ENCODE measurements at regions of chr2 and their contacts with region 1.

Region 1: GRCh38 chr2:153478334-153479261 is at the start of gene RPRM:
- DNase-seq: peak; percentile 51
- H3K4me3 Mint-ChIP-seq: peak within 1 kb of the TSS; percentile 61
- H3K27ac Mint-ChIP-seq: no peak within 1 kb of the TSS
- H3K4me1 Mint-ChIP-seq: peaks cover 9% of the 10 kb centered on the region
- H3K27me3 Mint-ChIP-seq: peaks cover 57% of the 10 kb centered on the region
- total RNA-seq, gene RPRM: not detected in 2 replicates

Region 2: DNA sequence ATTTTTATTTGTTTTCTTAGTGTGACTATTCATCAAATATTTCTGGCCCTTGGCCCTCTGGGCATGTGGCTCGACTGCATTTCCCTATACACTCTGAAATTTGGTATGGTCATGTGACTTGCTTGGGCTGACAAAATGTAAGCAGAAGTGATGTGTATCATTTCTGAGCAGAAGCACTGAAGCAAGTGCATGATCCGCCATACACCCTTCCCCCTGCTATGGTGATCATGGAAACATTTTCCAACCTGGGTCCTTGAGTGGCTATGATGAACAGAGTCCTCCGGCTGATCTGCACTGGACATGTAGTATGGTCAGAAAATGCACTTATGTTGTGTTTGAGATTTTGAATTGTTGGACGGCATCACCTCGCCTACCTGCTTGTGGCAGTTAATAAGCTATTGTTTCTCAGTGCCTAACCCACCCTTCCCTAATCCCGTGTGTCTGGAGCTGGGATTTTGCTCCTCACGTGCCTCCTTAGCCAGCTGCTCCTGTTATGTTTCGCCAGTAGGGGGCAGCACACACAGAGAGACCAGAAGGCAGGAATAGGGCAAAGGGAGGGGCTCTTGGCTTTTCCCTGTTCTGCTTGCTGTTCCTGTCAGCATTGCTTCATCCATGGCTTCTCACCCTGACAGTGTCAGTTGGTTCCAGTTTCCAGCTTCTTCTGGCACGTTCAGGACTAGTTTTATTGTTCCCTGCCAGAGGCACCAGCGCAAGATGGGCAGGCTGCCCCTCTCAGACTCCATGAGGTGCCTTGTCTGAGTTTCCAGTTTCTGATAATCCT is 552.9 kb before region 1 on chr2:
- intact Hi-C with region 1: loop called (anchors 2 kb)
- DNase-seq: peak; percentile 12
- H3K4me3 Mint-ChIP-seq: no peak overlapping the region
- H3K27ac Mint-ChIP-seq: no peak overlapping the region
- H3K4me1 Mint-ChIP-seq: no peaks in the 10 kb centered on the region
- H3K27me3 Mint-ChIP-seq: no peaks in the 10 kb centered on the region

Region 3: DNA sequence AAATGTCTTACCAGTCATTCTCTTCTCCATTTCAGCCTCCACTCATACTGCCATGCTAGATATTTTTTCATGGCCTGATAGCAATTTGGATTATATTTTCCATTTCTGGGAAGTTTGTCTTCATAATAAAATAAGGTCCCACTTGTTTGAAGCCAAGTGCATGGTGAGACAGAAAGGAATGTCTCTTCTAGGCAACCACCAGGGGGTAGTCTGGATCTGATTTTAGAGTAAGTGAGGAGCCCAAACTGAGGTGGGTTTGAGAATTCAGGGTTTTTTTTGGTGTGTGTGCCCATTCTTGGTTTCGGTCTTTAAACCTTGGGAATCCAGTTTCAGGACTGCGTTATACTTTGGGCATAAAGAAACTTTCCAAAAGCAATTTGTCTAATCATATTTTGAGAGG is 315.5 kb before region 1 on chr2:
- intact Hi-C with region 1: loop called (anchors 5 kb)
- DNase-seq: no peak
- H3K4me3 Mint-ChIP-seq: no peak overlapping the region
- H3K27ac Mint-ChIP-seq: no peak overlapping the region
- H3K4me1 Mint-ChIP-seq: no peaks in the 10 kb centered on the region
- H3K27me3 Mint-ChIP-seq: no peaks in the 10 kb centered on the region

Region 4: DNA sequence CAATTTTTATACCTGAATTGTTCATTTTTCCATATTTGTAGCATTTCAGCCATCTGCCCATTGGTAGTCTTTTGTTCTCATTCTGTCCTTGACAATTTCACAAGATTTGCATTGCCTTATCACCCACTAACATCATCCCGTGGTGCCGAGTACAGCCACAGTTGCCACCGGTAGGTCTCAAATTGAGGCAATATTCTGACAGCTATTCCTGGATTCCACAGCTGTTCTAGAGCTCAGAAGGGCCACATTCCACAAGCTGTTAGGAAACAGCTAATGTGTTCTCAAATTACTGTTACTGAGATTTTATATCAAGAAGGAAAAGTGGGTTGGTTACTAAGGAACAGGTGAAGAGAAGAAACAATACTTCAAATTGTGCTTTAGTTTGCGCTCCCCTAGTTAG is 178.8 kb before region 1 on chr2:
- intact Hi-C with region 1: no loop called
- DNase-seq: no peak
- H3K4me3 Mint-ChIP-seq: no peak overlapping the region
- H3K27ac Mint-ChIP-seq: no peak overlapping the region
- H3K4me1 Mint-ChIP-seq: no peaks in the 10 kb centered on the region
- H3K27me3 Mint-ChIP-seq: no peaks in the 10 kb centered on the region

Region 5: GRCh38 chr2:153499439-153499838 is 20.8 kb after region 1 on chr2:
- intact Hi-C with region 1: no loop called
- DNase-seq: no peak
- H3K4me3 Mint-ChIP-seq: no peak overlapping the region
- H3K27ac Mint-ChIP-seq: no peak overlapping the region
- H3K4me1 Mint-ChIP-seq: no peaks in the 10 kb centered on the region
- H3K27me3 Mint-ChIP-seq: no peaks in the 10 kb centered on the region

Region 6: GRCh38 chr2:153718457-153718856 is 239.9 kb after region 1 on chr2:
- intact Hi-C with region 1: loop called (anchors 5 kb)
- DNase-seq: no peak
- H3K4me3 Mint-ChIP-seq: no peak overlapping the region
- H3K27ac Mint-ChIP-seq: no peak overlapping the region
- H3K4me1 Mint-ChIP-seq: no peaks in the 10 kb centered on the region
- H3K27me3 Mint-ChIP-seq: no peaks in the 10 kb centered on the region

Region 7: GRCh38 chr2:153871231-153872221 is 392.9 kb after region 1 on chr2 and contains the start of gene GALNT13:
- intact Hi-C with region 1: loop called (anchors 5 kb)
- DNase-seq: no peak
- H3K4me3 Mint-ChIP-seq: no peak within 1 kb of the TSS
- H3K27ac Mint-ChIP-seq: no peak within 1 kb of the TSS
- H3K4me1 Mint-ChIP-seq: no peaks in the 10 kb centered on the region
- H3K27me3 Mint-ChIP-seq: peaks cover 30% of the 10 kb centered on the region
- total RNA-seq, gene GALNT13: not detected in 2 replicates